ENCODE measurements at regions of chr7 and their contacts with region 1.

Region 1: DNA sequence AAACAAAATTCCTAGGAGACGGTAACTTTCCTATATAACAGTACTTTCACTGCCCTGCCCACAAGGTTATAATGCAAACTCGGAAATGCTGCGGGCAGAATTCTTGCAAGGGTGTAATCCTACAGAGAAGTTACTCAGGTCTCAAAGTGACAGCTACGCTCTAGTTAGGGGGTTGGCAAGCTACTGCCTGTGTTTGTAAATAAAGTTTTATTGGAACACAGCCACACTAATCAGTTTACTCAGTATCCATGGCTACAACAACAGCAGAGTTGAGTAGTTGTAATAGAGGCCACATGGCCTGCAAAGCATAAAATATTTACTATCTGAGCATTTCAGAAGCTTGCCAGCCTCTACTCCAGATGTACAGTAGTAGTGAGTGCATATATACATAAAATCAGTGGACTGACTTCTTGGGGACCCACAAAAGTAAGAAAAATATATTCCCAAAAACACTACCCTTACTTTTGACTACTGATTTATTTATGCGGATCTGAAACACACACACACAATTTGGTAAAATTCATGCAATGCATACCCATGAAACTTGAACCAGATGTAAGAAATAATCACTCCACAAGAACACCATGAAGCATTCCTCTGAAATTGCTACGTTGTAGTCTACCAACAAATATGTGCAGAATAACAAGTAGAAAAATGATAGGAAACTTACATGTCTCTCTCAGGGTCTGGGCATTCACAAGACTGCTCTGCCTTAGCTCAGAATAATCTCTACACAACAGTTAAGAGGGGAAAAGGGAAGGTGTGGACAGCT is 53.0 kb downstream of the SMURF1 start:
- DNase-seq: no peak
- H3K4me3 ChIP-seq: no peak overlapping the region
- H3K27ac ChIP-seq: peak overlapping the region; percentile 84 to 93
- H3K4me1 ChIP-seq: peaks cover 0 to 85% (median 28%) of the 10 kb centered on the region in 4 donors
- H3K27me3 ChIP-seq: no peaks in the 10 kb centered on the region
- CTCF ChIP-seq: no peak

Region 2: GRCh38 chr7:99132595-99133321 is 41.8 kb after region 1 on chr7:
- intact Hi-C with region 1: loop called (anchors 5 kb)
- DNase-seq: no peak
- H3K4me3 ChIP-seq: no peak overlapping the region
- H3K27ac ChIP-seq: peak overlapping the region; percentile 95 to 100
- H3K4me1 ChIP-seq: peaks cover 0 to 100% (median 72%) of the 10 kb centered on the region in 4 donors
- H3K27me3 ChIP-seq: no peaks in the 10 kb centered on the region
- CTCF ChIP-seq: no peak

Measured in tibial artery (tissue), 4 donors.